Activated CD8-positive, alpha-beta T cell treated with anti-CD3 and anti-CD28 coated beads for 36 hours (primary cell): ENCODE measurements at regions of chr4 and their contacts with region 1.

Region 1: DNA sequence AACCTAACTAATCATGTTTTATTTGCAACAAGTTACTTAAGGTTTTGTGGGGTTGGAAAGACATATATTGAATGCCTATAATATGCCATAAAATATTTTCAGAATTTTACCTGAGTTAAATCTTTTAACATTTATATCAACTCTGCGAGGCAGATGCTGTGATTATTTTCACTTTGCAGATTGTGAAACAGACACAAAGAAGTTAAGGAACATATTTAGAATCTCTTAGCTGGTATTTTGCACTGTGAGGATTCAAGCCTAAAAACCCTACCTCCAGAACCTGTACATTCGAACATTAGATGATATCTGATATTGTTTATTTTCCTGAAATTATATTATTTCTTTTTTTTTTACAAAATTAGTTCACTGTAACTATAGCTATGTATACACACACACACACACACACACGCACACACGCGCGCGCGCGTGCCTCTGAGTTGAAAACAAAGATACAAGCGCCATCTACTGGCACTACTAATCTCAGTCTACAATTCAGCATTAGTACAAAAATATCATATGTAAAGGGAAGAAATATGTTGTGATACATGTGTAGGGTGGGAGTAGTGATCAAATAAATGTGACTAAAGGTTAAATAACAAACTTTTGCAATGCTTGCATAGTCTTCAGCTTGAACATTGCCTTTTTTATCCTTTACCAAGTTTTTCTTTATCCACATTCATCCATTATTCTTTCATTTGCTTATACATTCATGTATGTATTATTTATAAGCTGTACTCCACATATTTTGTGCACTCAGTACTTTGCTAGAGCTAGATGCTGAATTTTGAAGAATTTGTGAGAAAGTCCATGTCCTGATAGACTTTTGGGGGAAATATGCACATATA is 61.5 kb downstream of the ANXA10 start:
- DNase-seq: peak; percentile 80
- ATAC-seq: peak; percentile 77
- H3K4me3 Mint-ChIP-seq: no peak overlapping the region
- H3K27ac Mint-ChIP-seq: no peak overlapping the region
- H3K4me1 Mint-ChIP-seq: peaks cover 5% of the 10 kb centered on the region
- H3K27me3 Mint-ChIP-seq: no peaks in the 10 kb centered on the region
- CTCF ChIP-seq: peak; percentile 73

Region 2: GRCh38 chr4:168139336-168139735 is 14.5 kb before region 1 on chr4:
- CTCF ChIA-PET with region 1: interaction called, 13 read pairs
- POLR2A ChIA-PET with region 1: no interaction called
- intact Hi-C with region 1: no loop called
- DNase-seq: no peak
- ATAC-seq: no peak
- H3K4me3 Mint-ChIP-seq: no peak overlapping the region
- H3K27ac Mint-ChIP-seq: no peak overlapping the region
- H3K4me1 Mint-ChIP-seq: no peaks in the 10 kb centered on the region
- H3K27me3 Mint-ChIP-seq: peaks cover 8% of the 10 kb centered on the region
- CTCF ChIP-seq: no peak